Activated CD4-positive, alpha-beta T cell treated with anti-CD3 and anti-CD28 coated beads for 36 hours (primary cell): ENCODE measurements at regions of chr20 and their contacts with region 1.

Region 1: DNA sequence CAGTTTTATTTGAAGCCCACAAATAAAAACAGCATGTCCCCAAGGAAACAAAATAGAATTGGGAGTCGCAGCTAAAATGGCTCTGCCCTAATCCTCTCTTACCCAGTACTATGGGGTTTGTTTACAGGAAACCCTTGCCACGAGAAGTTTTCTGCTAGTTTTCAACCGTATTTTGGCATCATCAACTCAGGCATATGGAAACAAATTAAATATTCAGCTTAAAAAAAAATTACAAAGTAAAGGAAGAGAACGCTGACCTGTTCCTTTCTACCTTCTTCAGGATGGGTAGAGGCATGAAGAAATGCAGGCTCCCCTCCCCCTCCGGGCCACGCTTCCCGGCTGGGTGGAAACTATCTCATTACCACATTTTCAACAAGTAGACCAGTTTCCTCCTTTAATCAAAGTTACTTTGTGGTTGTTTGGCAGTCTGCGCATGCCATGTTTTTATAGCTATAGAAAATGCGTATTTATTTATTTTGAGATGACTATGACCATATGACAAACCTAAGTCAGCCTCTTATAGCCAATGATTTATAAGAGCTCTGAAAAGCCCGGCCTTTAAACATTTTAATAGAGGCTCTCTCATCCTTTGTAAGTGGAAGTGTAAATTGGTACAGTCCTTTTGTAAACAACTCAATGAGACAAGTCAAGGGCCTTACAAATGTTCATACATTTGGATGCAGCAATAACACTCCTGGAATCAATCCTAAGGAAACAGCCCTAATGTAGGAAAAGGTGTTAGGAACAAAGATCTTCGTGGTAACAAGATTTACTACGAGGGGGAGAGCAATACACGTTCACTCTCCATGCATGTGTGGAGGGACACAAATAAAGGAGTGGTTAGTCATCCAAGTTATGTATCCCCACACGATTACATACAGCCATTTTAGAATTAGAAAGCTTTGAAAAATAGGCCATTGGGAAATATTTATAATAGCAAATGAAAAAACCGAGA is 16.1 kb upstream of the ZNF217 start:
- DNase-seq: peak; percentile 87
- ATAC-seq: peak; percentile 82
- H3K4me3 Mint-ChIP-seq: peak overlapping the region; percentile 77
- H3K27ac Mint-ChIP-seq: peak overlapping the region; percentile 98
- H3K4me1 Mint-ChIP-seq: peaks cover 36% of the 10 kb centered on the region
- H3K27me3 Mint-ChIP-seq: no peaks in the 10 kb centered on the region

Region 2: DNA sequence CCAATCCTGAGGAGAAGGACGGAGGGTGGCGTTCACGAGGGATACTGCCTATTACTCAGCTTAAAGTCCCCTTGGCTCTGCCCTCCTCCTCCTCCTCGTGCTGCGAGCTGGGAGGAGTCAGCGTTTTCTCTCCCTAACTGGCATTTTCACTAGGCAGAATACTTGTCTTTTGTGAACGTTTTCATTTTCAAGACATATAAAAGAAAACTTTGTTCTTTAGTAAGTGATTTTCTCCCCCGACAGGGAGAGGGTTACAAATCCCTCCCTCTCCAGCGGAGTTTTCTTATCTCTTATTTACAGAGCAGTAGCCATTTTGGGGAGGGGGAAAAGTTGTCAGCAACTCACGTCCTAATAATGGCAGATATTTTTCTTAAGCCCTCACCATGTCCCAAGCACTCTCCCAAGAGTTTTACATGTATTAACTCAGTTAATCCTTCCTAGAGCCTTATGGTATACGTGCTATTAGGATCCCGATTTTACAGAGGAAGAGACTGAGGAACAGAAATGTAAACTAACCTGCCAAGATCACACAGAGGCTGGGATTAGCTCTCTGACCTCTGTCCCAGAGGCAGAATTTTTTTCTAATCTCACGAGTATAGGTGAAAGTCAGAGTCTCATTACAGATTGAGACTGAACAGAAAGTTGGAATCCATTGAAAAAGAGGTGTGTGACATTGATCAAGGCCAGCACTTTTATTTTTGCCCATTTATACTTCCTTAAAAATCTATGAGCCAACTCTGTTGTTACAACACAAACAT is 13.9 kb after region 1 on chr20:
- CTCF ChIA-PET with region 1: interaction called, 15 read pairs
- POLR2A ChIA-PET with region 1: interaction called, 7 read pairs
- intact Hi-C with region 1: no loop called
- DNase-seq: peak; percentile 65
- ATAC-seq: peak; percentile 78
- H3K4me3 Mint-ChIP-seq: peak overlapping the region; percentile 67
- H3K27ac Mint-ChIP-seq: peak overlapping the region; percentile 97
- H3K4me1 Mint-ChIP-seq: peaks cover 37% of the 10 kb centered on the region
- H3K27me3 Mint-ChIP-seq: no peaks in the 10 kb centered on the region